ENCODE measurements at regions of chr19 and their contacts with region 1.

Region 1: GRCh38 chr19:18214779-18215433 is 11.1 kb upstream of the RAB3A start:
- DNase-seq: no peak

Region 2: DNA sequence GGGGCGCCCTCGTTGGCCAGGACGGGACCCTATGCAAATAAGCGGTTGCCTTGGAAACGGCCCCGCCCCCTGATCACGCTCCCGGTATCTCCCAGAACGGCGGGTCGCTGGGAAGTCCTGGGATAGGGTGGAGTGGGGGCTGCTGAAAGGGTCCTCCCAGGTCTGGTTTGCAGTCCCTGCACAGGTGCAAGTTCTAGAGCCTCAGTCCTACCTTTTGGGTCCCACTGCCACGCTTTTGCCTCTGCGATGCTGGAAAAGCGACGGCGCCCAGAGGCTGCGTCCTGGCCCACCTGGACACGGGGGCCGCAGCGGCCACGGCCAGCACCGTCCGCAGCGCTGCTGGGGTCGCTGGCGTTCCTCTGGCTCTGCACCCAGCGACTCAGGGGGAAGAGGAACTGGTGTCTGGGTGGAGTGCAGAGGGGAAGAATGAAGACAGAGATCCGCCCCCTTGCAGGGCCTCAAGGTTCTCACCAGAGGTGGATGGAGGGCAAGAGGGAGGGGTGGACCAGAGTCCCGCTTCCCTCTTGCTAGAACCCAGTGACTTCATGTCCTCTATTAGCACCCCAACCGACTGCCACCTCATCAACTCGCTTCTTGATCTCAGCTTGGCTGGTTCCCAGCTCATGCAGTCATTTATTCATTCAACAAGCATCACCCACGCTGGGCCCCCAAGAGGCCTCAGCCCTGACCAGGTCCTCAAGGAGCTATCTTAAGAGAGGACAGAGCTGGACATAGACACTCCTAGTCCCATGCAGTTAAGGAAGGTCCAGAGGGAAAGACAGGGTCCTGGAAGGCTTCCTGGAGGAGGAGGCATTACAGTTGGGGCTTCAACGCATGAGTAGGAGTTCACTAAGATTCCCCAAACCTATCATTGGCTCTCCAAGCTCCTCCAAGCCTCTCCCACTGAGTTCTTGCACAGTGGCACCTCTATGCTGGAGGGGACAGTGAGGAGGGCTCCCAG is 182.6 kb after region 1 on chr19 and contains the start of gene LRRC25:
- intact Hi-C with region 1: loop called (anchors 10 kb)
- DNase-seq: peak in 1 of 10 donors; percentile 88